Dorsolateral prefrontal cortex (tissue), 120 donors: ENCODE measurements at regions of chr16 and their contacts with region 1.

Region 1: DNA sequence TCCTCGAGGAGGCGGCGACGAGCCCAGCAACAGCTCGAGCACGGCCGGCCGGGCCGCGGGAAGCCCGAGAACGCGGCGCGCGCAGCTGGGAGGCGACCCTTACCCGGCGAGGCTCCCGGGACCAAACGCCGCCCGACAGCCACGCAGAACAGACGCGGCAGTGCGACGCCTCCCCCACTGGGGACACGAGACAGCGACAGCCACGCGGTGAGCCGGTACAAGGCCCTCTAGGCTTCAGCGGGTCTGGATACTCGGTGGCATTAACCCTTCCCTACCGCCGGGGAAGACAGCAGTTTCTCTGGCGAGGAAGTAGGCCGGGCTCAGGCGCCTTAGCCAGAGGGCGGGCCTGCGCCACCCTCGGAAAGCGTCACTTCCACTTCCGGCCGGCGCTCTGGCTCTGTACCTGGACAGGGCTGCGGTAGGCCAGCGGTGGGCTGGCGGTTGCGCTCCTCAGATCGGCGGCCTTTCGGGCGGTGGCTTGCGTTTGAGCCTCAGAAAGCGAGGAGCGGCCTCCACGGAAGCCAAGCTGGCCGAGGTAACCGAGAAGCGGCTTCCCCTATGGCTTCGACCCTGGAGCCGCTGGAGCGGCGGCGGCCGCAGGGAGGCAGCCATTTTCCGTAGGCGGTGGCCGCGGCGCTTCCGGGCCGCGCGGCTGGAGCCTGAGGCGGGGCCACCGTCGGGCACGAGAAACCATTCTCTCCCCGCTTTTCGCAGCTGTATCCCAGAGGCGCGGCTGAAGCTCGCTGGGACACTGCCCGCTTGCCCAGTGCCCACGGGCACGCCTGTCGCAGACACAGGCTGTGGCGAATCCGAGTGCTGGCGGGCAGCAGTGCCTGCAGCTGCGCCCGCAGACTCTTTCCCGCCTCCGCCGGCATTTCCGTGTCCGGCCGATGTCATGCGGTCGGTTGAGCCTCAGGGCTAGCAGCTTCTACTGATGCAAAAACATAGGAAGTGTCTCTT is at the starts of genes TIGD7 and ZNF75A:
- DNase-seq: peak; percentile 87 to 97 (median 95)
- H3K4me3 ChIP-seq: peak within 1 kb of the TSS; percentile 61 to 97 (median 89)
- H3K27ac ChIP-seq: peak within 1 kb of the TSS; percentile 62 to 98 (median 94)
- H3K27me3 ChIP-seq: no peaks in the 10 kb centered on the region
- CTCF ChIP-seq: peak in 50 of 56 donors; percentile 2 to 69 (median 44)
- total RNA-seq, gene TIGD7: 7.4 to 20.6 (median 12.1) TPM
- total RNA-seq, gene ZNF75A: 22.2 to 53.5 (median 37.5) TPM

Region 2: DNA sequence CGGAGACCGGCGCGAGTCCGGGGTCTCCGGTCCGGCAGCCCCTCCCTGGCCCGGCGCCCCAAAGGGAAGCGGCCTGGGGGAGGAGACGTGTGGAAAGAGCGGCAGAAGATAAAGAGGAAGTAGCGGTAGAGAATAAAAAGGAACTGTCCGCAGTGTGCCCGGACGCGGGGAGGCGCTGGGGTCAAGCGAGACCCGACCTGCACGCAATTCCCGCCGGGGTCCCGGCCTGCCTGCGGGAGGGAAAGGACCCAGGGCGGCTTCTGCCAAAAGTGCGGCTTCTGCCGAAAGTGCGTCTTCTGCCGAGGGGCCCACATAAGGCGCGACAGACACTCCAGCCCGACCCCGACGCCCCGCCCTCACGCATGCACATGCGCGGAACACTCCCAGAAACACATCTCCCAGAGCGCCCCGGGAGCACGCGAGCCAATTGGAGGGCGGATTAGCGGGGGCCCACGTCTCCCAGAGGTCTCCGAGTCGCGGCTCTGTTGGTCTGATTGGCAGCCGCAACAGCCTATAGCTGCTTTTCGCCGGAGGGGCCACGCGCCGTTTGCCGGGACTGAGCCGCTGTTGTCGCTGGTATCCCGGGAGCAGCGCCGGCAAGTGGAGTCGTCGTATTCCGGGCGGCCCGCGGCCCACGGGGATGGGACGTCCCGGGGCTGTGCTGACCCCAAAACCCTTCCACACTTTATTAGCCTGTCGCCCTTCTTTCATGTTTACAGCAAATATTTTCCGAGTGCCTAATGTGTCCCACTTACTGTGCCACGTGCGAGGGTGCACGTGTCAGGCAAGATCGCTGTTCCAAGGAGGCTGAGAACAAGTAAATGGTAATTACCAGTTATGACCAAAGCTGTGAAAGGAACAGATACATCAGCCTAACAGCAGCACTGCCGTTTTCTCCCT is 41.0 kb before region 1 on chr16:
- intact Hi-C with region 1: loop called in 1 of 2 experiments (anchors 1 kb)
- DNase-seq: peak; percentile 97 to 99 (median 99)
- H3K4me3 ChIP-seq: peak overlapping the region; percentile 57 to 97 (median 88)
- H3K27ac ChIP-seq: peak overlapping the region; percentile 79 to 99 (median 95)
- H3K27me3 ChIP-seq: no peaks in the 10 kb centered on the region
- CTCF ChIP-seq: peak in 49 of 56 donors; percentile 1 to 69 (median 40)

Region 3: DNA sequence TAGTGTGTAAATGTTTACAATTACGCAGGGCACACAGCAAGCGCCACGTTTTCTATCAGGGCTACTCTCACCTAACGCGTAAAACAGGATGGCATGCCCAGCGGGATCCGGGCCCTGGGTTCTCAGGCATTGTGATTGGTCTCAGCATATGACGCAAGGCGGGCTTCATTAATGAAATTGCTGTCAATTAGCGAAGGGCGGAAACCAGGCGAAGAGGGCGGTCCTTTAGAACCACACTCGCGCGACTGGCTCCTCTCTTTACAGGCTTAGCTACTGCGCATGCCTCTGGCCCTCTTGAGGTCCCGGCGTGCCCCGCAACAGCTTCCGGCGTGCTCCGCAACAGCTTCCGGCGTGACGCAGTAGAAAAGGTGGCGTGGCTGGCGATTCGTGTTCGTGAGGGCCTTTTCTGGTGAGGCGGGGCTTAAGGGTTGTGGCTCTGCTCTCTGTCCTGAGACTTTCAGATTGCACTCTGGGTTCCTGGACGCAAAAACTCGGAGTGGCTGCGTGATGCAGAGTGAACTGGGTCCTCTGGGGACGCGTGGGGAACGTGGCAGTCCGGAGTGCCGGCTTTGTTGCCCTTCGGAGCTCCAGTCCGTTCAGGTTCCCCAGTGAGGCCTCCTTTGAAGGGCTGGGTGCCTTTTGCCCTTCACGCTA is 59.5 kb after region 1 on chr16:
- intact Hi-C with region 1: loop called in 1 of 2 experiments (anchors 5 kb)
- DNase-seq: peak; percentile 75 to 95 (median 92)
- H3K4me3 ChIP-seq: peak overlapping the region; percentile 37 to 88 (median 70)
- H3K27ac ChIP-seq: peak overlapping the region; percentile 15 to 95 (median 80)
- H3K27me3 ChIP-seq: peaks cover 0 to 5% (median 0%) of the 10 kb centered on the region in 45 donors
- CTCF ChIP-seq: peak in 12 of 56 donors; percentile 9 to 47 (median 19)

Region 4: DNA sequence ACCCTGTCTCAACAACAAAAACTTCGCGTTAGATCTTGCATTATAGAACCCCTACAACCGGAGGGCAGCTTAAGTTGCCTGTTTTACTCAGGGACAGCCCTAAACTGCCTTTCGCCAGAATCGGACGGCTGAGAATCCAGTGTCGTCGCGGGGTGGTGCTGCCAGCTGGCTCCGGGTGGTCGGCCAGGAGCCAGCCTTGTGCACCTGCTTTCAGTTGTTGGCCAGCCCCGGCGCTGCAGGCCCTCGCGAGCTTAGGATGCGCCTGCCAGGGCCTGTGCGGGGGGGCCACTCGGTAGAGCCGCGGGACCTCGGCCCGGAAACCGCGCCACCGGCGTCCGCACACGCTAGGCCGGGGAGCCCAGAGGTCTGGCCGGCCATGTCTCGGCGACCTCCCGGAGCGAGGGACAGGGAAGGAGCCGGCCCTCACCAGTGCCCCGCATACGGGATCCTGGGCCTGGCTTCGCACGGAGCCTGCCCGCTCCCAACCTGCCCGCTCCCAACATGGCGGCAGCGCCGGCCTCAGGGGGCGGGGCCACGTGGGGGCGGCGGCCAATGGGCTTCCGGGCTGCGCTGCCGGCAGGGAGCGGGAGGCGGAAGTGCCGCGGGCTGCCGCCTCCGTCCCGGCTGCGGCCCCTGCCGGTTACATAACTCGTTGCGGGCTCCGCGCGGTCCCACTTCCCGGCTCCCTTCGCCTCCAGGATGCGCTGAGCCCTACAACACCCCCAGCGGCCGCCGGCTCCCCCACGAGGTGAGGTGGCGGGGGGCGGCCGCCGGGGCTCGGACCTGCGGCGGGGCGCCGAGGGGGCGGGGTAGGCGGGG is 152.3 kb after region 1 on chr16:
- intact Hi-C with region 1: loop called (anchors 2 to 5 kb)
- DNase-seq: peak; percentile 83 to 94 (median 90)
- H3K4me3 ChIP-seq: peak overlapping the region; percentile 62 to 97 (median 88)
- H3K27ac ChIP-seq: peak overlapping the region; percentile 84 to 100 (median 99)
- H3K27me3 ChIP-seq: no peaks in the 10 kb centered on the region
- CTCF ChIP-seq: peak in 53 of 56 donors; percentile 23 to 77 (median 48)